B cell (primary cell): ENCODE measurements at regions of chr12 and their contacts with region 1.

Region 1: GRCh38 chr12:24109381-24110039 is 160.0 kb upstream of the SOX5 start:
- DNase-seq: peak; percentile 32
- ATAC-seq: no peak
- H3K4me3 ChIP-seq: no peak overlapping the region
- H3K4me3 Mint-ChIP-seq: no peak overlapping the region
- H3K27ac ChIP-seq: no peak overlapping the region
- H3K27ac Mint-ChIP-seq: no peak overlapping the region
- H3K4me1 ChIP-seq: no peaks in the 10 kb centered on the region
- H3K4me1 Mint-ChIP-seq: peaks cover 5% of the 10 kb centered on the region
- H3K27me3 ChIP-seq: no peaks in the 10 kb centered on the region
- H3K27me3 Mint-ChIP-seq: no peaks in the 10 kb centered on the region
- CTCF ChIP-seq: peak; percentile 67

Region 2: GRCh38 chr12:23204933-23205778 is 904.4 kb before region 1 on chr12:
- CTCF ChIA-PET with region 1: no interaction called
- POLR2A ChIA-PET with region 1: no interaction called
- intact Hi-C with region 1: loop called (anchors 10 kb)
- DNase-seq: peak; percentile 71
- ATAC-seq: peak; percentile 89
- H3K4me3 ChIP-seq: no peak overlapping the region
- H3K4me3 Mint-ChIP-seq: no peak overlapping the region
- H3K27ac ChIP-seq: no peak overlapping the region
- H3K27ac Mint-ChIP-seq: no peak overlapping the region
- H3K4me1 ChIP-seq: no peaks in the 10 kb centered on the region
- H3K4me1 Mint-ChIP-seq: no peaks in the 10 kb centered on the region
- H3K27me3 ChIP-seq: no peaks in the 10 kb centered on the region
- H3K27me3 Mint-ChIP-seq: peaks cover 22% of the 10 kb centered on the region
- CTCF ChIP-seq: peak; percentile 96

Region 3: GRCh38 chr12:24728366-24728765 is 618.9 kb after region 1 on chr12:
- CTCF ChIA-PET with region 1: no interaction called
- POLR2A ChIA-PET with region 1: no interaction called
- intact Hi-C with region 1: loop called (anchors 5 kb)
- DNase-seq: peak; percentile 50
- ATAC-seq: no peak
- H3K4me3 ChIP-seq: no peak overlapping the region
- H3K4me3 Mint-ChIP-seq: peak overlapping the region; percentile 17
- H3K27ac ChIP-seq: no peak overlapping the region
- H3K27ac Mint-ChIP-seq: no peak overlapping the region
- H3K4me1 ChIP-seq: peaks cover 22 to 23% of the 10 kb centered on the region in 2 donors
- H3K4me1 Mint-ChIP-seq: peaks cover 57% of the 10 kb centered on the region
- H3K27me3 ChIP-seq: no peaks in the 10 kb centered on the region
- H3K27me3 Mint-ChIP-seq: no peaks in the 10 kb centered on the region
- CTCF ChIP-seq: peak; percentile 76

Region 4: GRCh38 chr12:24838531-24838950 is 729.0 kb after region 1 on chr12:
- CTCF ChIA-PET with region 1: interaction called, 8 read pairs
- POLR2A ChIA-PET with region 1: no interaction called
- intact Hi-C with region 1: loop called (anchors 1 kb)
- DNase-seq: peak; percentile 4
- ATAC-seq: no peak
- H3K4me3 ChIP-seq: no peak overlapping the region
- H3K4me3 Mint-ChIP-seq: no peak overlapping the region
- H3K27ac ChIP-seq: no peak overlapping the region
- H3K27ac Mint-ChIP-seq: no peak overlapping the region
- H3K4me1 ChIP-seq: peaks cover 0 to 13% of the 10 kb centered on the region in 2 donors
- H3K4me1 Mint-ChIP-seq: peaks cover 13% of the 10 kb centered on the region
- H3K27me3 ChIP-seq: no peaks in the 10 kb centered on the region
- H3K27me3 Mint-ChIP-seq: no peaks in the 10 kb centered on the region
- CTCF ChIP-seq: no peak